GM10248 (cell line): ENCODE measurements at regions of chr2 and their contacts with region 1.

Region 1: GRCh38 chr2:20135631-20136050 is 84.2 kb upstream of the LAPTM4A start:
- DNase-seq: peak; percentile 83
- CTCF ChIP-seq: peak; percentile 94

Region 2: GRCh38 chr2:19911799-19912509 is 223.7 kb before region 1 on chr2:
- CTCF ChIA-PET with region 1: no interaction called
- POLR2A ChIA-PET with region 1: no interaction called
- DNase-seq: no peak
- CTCF ChIP-seq: no peak

Region 3: GRCh38 chr2:20145497-20146193 is 10.0 kb after region 1 on chr2:
- CTCF ChIA-PET with region 1: interaction called, 24 read pairs
- POLR2A ChIA-PET with region 1: no interaction called
- DNase-seq: peak; percentile 73
- CTCF ChIP-seq: no peak

Region 4: DNA sequence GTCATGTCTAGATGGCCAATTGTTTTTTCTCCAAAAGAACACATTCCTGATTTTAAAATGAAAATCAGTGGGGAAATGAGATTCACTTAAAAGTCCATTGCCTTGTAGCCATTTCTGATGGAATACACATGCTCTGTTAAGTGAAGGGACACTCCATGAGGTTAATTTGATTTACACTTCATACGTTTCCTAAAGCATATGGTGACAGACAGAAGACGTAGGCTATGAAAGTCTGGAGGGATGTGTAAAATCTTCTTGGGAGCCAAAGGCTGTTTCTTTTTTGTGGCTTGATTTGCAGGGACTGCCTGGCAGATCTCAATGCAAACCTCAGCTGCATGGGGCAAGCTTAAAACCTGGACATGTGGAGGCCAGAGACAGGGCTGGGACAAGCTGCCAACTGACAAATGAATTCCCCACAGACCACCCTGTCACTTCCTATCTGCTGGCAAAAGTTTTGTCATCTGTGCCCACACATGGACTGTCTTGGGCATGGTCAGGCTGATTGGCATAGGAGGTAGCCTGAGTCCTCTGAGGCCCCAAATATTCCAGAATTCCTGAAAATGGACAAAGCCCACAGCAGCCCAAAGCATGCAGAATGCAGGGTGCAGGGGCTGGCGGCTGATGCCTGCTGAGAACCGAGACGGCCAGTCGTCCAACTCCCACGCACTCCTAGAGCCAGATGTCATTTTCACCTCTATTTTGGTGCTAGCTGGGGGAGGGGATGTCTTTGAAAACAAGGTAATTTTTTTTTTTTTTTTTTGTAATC is 15.3 kb after region 1 on chr2:
- CTCF ChIA-PET with region 1: interaction called, 24 read pairs
- POLR2A ChIA-PET with region 1: no interaction called
- DNase-seq: no peak
- CTCF ChIP-seq: no peak

Region 5: GRCh38 chr2:20207051-20207450 is 71.4 kb after region 1 on chr2:
- CTCF ChIA-PET with region 1: interaction called, 13 read pairs
- POLR2A ChIA-PET with region 1: no interaction called
- DNase-seq: peak; percentile 52
- CTCF ChIP-seq: no peak

Region 6: DNA sequence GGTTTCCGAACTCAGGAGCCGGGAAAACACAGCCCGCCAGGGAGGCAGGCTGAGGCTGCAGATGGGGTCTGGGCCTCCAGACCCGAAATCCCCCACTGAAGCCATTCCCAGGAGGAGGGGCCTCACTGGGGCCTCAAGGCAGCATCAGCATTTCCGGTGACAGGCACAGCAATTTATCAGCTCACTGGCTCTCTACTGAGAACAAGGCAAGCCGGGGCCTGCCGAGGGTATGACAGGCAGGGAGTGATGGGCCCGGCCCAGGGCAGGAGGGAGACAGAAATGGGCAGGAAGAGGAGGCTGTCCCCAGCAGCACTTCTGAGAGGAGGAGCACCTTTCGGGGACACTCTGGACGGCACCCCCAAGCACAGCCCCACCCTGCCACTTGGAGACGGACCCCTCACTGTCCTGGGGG is 76.8 kb after region 1 on chr2:
- CTCF ChIA-PET with region 1: interaction called, 13 read pairs
- POLR2A ChIA-PET with region 1: no interaction called
- DNase-seq: no peak
- CTCF ChIP-seq: no peak